ENCODE measurements at regions of chr14 and their contacts with region 1.

Region 1: GRCh38 chr14:103104654-103105452 is 10.3 kb downstream of the EXOC3L4 start:
- DNase-seq: peak; percentile 67 to 84 (median 82)
- H3K4me3 ChIP-seq: no peak overlapping the region
- H3K27ac ChIP-seq: no peak overlapping the region
- H3K4me1 ChIP-seq: peaks cover 9% of the 10 kb centered on the region
- H3K27me3 ChIP-seq: no peaks in the 10 kb centered on the region
- CTCF ChIP-seq: peak; percentile 92 to 98 (median 97)
- EP300 ChIP-seq: no peak
- POLR2A ChIP-seq: no peak

Region 2: DNA sequence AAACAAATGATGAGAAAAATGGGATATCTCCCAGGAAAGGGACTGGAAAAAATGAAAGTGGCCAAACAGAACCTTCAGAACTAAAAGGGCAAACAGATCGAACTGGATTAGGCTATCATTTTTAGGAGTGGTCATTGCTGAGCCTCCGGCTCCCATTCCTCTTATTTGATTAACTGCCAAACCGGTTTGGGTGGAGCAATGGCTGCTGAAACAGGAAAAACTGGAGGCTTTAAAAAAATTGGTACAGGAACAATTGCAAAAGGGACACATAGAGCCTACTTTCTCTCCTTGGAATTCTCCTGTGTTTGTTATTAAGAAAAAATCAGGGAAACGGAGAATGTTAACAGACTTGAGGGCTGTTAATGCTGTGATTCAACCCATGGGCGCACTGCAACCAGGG is 68.1 kb after region 1 on chr14:
- intact Hi-C with region 1: no loop called
- DNase-seq: no peak
- H3K4me3 ChIP-seq: no peak overlapping the region
- H3K27ac ChIP-seq: no peak overlapping the region
- H3K4me1 ChIP-seq: no peaks in the 10 kb centered on the region
- H3K27me3 ChIP-seq: no peaks in the 10 kb centered on the region
- CTCF ChIP-seq: no peak
- EP300 ChIP-seq: no peak
- POLR2A ChIP-seq: no peak

Region 3: GRCh38 chr14:103185051-103185992 is 80.5 kb after region 1 on chr14:
- intact Hi-C with region 1: loop called (anchors 2 to 5 kb)
- DNase-seq: no peak
- H3K4me3 ChIP-seq: no peak overlapping the region
- H3K27ac ChIP-seq: no peak overlapping the region
- H3K4me1 ChIP-seq: peaks cover 2% of the 10 kb centered on the region
- H3K27me3 ChIP-seq: no peaks in the 10 kb centered on the region
- CTCF ChIP-seq: peak; percentile 19 to 69 (median 64)
- EP300 ChIP-seq: no peak
- POLR2A ChIP-seq: no peak

Region 4: GRCh38 chr14:103333754-103334643 is 229.1 kb after region 1 on chr14 and contains the start of gene EIF5:
- intact Hi-C with region 1: no loop called
- DNase-seq: peak; percentile 99 to 100 (median 99)
- H3K4me3 ChIP-seq: peak within 1 kb of the TSS; percentile 96
- H3K27ac ChIP-seq: peak within 1 kb of the TSS; percentile 99 to 100
- H3K4me1 ChIP-seq: peaks cover 6% of the 10 kb centered on the region
- H3K27me3 ChIP-seq: no peaks in the 10 kb centered on the region
- CTCF ChIP-seq: peak in 2 of 3 donors; percentile 73 to 78
- EP300 ChIP-seq: no peak
- POLR2A ChIP-seq: peak; percentile 96
- total RNA-seq, gene EIF5: 76.7 to 169 (median 134) TPM